GM12878 (cell line): ENCODE measurements at regions of chr5 and their contacts with region 1.

Region 1: GRCh38 chr5:62460578-62460983 is 48.0 kb downstream of the IPO11 start:
- DNase-seq: no peak
- ATAC-seq: peak; percentile 90
- H3K4me3 ChIP-seq: no peak overlapping the region
- H3K27ac ChIP-seq: no peak overlapping the region
- H3K4me1 ChIP-seq: no peaks in the 10 kb centered on the region
- H3K27me3 ChIP-seq: no peaks in the 10 kb centered on the region
- CTCF ChIP-seq: peak; percentile 69 to 71 (median 71)
- EP300 ChIP-seq: no peak
- POLR2A ChIP-seq: no peak
- RAD21 ChIP-seq: peak; percentile 83

Region 2: GRCh38 chr5:61775906-61776305 is 684.7 kb before region 1 on chr5:
- CTCF ChIA-PET with region 1: no interaction called
- POLR2A ChIA-PET with region 1: no interaction called
- RAD21 ChIA-PET with region 1: no interaction called
- SMC1A ChIA-PET with region 1: no interaction called
- in situ Hi-C with region 1: no loop called
- intact Hi-C with region 1: no loop called
- DNase-seq: no peak
- ATAC-seq: no peak
- H3K4me3 ChIP-seq: no peak overlapping the region
- H3K27ac ChIP-seq: no peak overlapping the region
- H3K4me1 ChIP-seq: no peaks in the 10 kb centered on the region
- H3K27me3 ChIP-seq: 0 out of 4 replicates have a peak, but pooled peaks cover 0 to 3% of the 10 kb centered on the region in 2 experiments
- CTCF ChIP-seq: no peak
- EP300 ChIP-seq: no peak
- POLR2A ChIP-seq: no peak
- RAD21 ChIP-seq: no peak

Region 3: GRCh38 chr5:62475072-62475471 is 14.5 kb after region 1 on chr5:
- CTCF ChIA-PET with region 1: interaction called, 10 read pairs
- POLR2A ChIA-PET with region 1: no interaction called
- RAD21 ChIA-PET with region 1: no interaction called
- SMC1A ChIA-PET with region 1: interaction called, 4 read pairs
- in situ Hi-C with region 1: no loop called
- intact Hi-C with region 1: no loop called
- DNase-seq: no peak
- ATAC-seq: no peak
- H3K4me3 ChIP-seq: no peak overlapping the region
- H3K27ac ChIP-seq: no peak overlapping the region
- H3K4me1 ChIP-seq: no peaks in the 10 kb centered on the region
- H3K27me3 ChIP-seq: no peaks in the 10 kb centered on the region
- CTCF ChIP-seq: no peak
- EP300 ChIP-seq: no peak
- POLR2A ChIP-seq: no peak
- RAD21 ChIP-seq: no peak

Region 4: DNA sequence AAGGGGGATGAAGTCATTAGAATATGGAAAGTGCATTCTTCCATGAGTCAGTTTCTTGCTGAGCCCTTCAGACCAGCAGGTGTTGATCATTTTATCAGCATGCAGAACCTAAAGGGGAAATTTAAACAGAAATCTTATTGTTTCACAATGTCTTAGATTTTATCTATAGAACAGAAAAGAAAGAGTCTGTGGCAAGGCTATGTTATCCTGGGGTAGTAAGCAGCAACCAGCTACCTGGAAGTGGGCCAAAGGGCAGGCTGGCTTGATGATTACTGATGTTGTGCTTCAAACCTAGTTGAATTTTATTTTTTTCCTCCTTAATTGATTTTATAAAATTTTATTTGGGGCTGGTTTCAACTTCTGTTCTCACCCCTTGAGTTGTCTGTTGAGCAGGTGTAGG is 219.5 kb after region 1 on chr5:
- CTCF ChIA-PET with region 1: no interaction called
- POLR2A ChIA-PET with region 1: no interaction called
- RAD21 ChIA-PET with region 1: no interaction called
- SMC1A ChIA-PET with region 1: no interaction called
- in situ Hi-C with region 1: no loop called
- intact Hi-C with region 1: no loop called
- DNase-seq: no peak
- ATAC-seq: no peak
- H3K4me3 ChIP-seq: no peak overlapping the region
- H3K27ac ChIP-seq: no peak overlapping the region
- H3K4me1 ChIP-seq: no peaks in the 10 kb centered on the region
- H3K27me3 ChIP-seq: no peaks in the 10 kb centered on the region
- CTCF ChIP-seq: no peak
- EP300 ChIP-seq: no peak
- POLR2A ChIP-seq: no peak
- RAD21 ChIP-seq: no peak

Region 5: DNA sequence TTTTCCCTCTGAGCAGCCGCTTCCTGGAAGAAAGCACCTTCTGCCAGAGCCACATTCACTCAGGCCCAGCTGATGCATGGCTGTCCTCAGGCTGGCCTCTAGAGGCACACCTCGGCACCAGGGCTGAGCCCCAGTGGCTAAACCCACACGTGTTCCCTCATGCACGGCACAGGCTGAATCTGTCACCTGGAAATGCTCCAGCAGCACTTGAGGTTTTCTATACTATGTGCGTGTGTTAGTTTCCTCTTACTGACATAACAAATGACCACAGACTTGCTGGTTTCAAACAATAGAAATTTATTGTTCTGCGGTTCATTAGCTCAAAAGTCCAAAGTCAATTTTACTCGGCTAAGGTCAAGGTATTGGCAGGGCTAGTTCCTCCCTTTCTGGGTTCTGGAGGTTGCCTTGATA is 259.5 kb after region 1 on chr5:
- CTCF ChIA-PET with region 1: interaction called, 12 read pairs
- POLR2A ChIA-PET with region 1: no interaction called
- RAD21 ChIA-PET with region 1: interaction called, 12 read pairs
- SMC1A ChIA-PET with region 1: interaction called, 4 read pairs
- in situ Hi-C with region 1: no loop called
- intact Hi-C with region 1: loop called (anchors 2 kb)
- DNase-seq: peak; percentile 34
- ATAC-seq: peak; percentile 98
- H3K4me3 ChIP-seq: no peak overlapping the region
- H3K27ac ChIP-seq: no peak overlapping the region
- H3K4me1 ChIP-seq: no peaks in the 10 kb centered on the region
- H3K27me3 ChIP-seq: no peaks in the 10 kb centered on the region; a peak in 1 of 4 replicates
- CTCF ChIP-seq: peak; percentile 40 to 64 (median 46)
- EP300 ChIP-seq: peak; percentile 57 to 65; a peak in 2 of 4 replicates
- POLR2A ChIP-seq: no peak
- RAD21 ChIP-seq: peak; percentile 38; the same call in 1 of the 2 replicates

Region 6: GRCh38 chr5:62779010-62779422 is 318.4 kb after region 1 on chr5:
- CTCF ChIA-PET with region 1: interaction called, 78 read pairs
- POLR2A ChIA-PET with region 1: no interaction called
- RAD21 ChIA-PET with region 1: interaction called, 18 read pairs
- SMC1A ChIA-PET with region 1: interaction called, 46 read pairs
- in situ Hi-C with region 1: loop called (anchors 5 kb)
- intact Hi-C with region 1: loop called (anchors 1 kb)
- DNase-seq: no peak
- ATAC-seq: peak; percentile 87
- H3K4me3 ChIP-seq: no peak overlapping the region
- H3K27ac ChIP-seq: no peak overlapping the region
- H3K4me1 ChIP-seq: no peaks in the 10 kb centered on the region; the same call in 1 of the 2 replicates
- H3K27me3 ChIP-seq: no peaks in the 10 kb centered on the region
- CTCF ChIP-seq: peak; percentile 66 to 70 (median 66)
- EP300 ChIP-seq: no peak
- POLR2A ChIP-seq: no peak
- RAD21 ChIP-seq: peak; percentile 79